ENCODE measurements at regions of chr10 and their contacts with region 1.

Region 1: DNA sequence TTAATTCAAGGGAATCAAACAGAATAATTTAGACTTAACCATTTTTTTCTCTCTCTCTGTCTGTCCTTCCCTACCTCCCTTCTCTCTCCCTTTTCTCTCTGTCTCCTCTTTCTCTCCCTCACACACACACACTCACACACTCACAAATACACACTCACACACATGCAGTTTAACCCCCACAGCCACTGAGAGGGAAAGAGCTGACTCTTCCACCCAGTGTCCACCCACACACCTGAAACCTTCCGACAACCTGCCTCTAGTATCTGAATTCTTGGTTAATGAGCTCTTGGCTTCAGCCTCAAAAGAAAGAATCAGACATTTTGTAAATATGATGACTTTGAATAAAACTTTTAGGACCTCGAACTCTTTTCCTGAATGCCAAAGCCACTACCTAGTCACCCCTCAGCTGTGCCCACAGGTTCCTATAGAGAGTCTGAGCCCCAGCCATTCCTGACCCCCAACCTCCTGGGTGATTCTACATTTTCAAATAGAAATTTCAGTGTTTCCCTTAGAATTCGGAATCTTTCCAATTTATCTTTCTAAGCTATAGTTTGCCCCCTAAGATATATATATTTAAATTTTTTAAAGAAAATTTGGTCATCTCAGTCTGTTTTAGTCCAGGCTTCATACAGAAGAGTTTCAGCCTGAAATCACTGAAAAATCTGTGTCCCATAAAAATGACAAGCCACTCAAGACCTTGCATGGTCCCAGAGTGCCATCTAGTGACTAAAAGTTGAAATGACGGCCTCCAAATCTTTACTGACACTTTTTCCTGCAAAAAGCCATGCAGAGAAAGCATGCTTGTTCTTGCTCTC is 202.8 kb downstream of the IPMK start:
- DNase-seq: no peak

Region 2: DNA sequence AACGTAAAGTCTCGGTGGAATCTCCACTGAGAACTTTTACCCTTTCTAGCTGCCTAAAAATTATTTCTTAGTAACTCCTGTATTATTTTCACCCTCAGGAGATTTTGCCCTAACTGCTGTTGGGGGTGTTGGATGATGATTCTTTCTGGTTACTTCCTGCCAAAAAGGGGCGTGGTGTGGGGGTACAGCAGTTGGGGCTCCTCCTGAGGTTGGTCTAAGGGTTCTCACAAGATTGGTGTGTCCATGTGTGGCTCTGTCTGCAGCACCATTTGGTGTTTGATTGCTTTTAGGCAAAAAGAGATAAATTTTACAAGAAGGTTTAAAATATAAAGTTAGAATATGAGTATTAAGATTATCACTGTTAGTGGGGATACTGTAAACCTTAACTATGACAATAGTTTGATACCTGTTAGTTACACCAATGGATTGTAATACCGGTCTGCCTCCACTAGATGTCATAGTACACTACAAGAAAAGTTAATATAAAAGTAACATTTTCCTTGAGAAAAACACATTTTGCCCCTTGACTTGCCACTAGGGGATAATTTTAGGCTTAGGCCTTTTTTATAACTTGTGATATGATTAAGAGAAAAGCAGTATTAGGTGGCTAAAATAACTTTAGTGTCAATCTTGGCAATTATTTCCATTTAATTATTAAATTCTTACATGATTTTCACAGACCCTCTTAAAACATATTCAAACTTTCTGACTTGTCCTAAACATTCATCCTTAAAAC is 725.9 kb before region 1 on chr10:
- intact Hi-C with region 1: loop called (anchors 10 kb)
- DNase-seq: no peak

Region 3: DNA sequence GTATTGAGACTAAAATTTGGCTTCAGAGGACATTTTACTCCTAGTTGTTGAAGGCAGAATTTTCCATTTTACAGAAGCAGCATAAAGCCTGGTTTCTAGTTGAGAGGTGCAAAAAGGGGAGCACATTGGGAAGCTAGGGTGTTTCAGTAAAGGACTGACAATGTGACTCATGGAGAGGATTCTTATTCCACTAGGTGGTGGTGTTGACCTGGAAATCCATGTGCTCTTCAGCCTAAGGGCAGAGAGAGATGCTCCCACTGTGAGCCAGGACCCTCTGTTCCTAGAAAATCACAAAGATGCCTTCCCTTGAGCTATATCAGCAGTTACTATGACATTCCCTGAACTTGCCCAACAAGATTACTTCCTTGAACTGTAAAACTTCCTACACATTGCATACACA is 485.0 kb before region 1 on chr10:
- intact Hi-C with region 1: loop called (anchors 2 kb)
- DNase-seq: no peak

Region 4: DNA sequence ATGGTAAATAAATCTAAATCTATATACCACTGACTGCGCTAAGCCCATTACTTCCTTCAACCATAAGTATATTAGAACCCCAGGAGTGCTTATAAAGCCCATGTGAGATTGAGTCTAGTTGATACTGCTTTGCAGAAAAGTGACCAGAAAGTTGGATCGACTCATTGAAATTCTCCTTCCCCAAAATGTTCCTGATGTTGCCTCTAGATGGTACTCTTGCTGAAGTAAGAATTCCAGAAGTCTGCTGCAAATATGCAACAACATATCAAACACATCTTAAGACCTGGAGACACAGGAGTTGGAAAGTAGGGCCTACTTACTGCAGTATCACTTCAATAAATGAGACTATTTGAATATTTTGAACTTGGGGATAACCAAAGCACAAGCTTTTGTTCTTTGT is 348.0 kb before region 1 on chr10:
- intact Hi-C with region 1: loop called (anchors 10 kb)
- DNase-seq: no peak

Region 5: GRCh38 chr10:58264780-58265179 is 199.9 kb after region 1 on chr10:
- intact Hi-C with region 1: no loop called
- DNase-seq: no peak

Measured in cardiac septum (tissue), 1 donor.